Activated naive CD4-positive, alpha-beta T cell treated with anti-CD3 and anti-CD28 coated beads for 36 hours (primary cell): ENCODE measurements at regions of chr11 and their contacts with region 1.

Region 1: DNA sequence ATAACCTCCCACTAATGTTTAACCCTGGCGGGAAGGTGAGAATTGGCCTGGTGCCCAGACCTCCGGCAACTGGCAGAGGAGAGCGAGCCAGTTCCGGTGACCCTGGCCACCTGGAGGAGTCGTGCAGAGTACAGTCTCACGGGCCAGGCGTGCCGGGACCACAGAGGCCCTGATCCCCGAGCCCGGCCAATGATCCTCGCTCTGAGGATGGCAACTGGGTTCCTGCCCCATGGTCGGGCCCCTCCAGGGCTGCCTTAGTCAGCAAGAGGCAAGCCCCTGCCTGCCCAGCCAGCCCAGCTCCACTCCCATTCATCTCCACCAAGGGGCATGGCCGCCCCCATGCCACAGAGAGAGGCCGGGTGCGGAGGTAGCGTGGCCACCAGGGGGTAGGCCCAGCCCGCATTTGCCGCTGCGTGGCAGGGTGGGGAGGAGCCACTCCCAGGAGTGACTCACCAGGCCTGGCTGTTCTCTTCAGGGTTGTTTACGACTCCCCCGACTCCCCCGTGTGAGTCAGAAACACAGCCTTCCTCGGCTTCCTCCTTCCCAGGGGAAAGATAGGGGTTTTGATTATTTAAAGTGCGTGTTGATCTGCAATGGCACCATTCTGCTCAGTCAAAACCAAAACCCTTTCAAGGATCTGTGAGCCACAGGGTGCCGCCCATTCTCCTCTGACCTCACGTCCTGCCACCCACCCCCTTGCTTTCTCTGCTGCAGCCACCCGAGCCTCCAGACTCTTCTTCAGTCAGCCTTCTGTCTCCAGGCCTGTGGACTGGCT is at the start of gene SLC25A45:
- DNase-seq: peak; percentile 97
- H3K4me3 Mint-ChIP-seq: peak within 1 kb of the TSS; percentile 96
- H3K27ac Mint-ChIP-seq: peak within 1 kb of the TSS; percentile 100
- H3K4me1 Mint-ChIP-seq: peaks cover 48% of the 10 kb centered on the region
- H3K27me3 Mint-ChIP-seq: no peaks in the 10 kb centered on the region
- total RNA-seq, gene SLC25A45: 10.4 to 12.1 TPM

Region 2: GRCh38 chr11:65497141-65498041 is 115.2 kb after region 1 on chr11:
- CTCF ChIA-PET with region 1: no interaction called
- intact Hi-C with region 1: loop called (anchors 1 kb)
- DNase-seq: peak; percentile 99
- H3K4me3 Mint-ChIP-seq: no peak overlapping the region
- H3K27ac Mint-ChIP-seq: no peak overlapping the region
- H3K4me1 Mint-ChIP-seq: peaks cover 37% of the 10 kb centered on the region
- H3K27me3 Mint-ChIP-seq: no peaks in the 10 kb centered on the region

Region 3: DNA sequence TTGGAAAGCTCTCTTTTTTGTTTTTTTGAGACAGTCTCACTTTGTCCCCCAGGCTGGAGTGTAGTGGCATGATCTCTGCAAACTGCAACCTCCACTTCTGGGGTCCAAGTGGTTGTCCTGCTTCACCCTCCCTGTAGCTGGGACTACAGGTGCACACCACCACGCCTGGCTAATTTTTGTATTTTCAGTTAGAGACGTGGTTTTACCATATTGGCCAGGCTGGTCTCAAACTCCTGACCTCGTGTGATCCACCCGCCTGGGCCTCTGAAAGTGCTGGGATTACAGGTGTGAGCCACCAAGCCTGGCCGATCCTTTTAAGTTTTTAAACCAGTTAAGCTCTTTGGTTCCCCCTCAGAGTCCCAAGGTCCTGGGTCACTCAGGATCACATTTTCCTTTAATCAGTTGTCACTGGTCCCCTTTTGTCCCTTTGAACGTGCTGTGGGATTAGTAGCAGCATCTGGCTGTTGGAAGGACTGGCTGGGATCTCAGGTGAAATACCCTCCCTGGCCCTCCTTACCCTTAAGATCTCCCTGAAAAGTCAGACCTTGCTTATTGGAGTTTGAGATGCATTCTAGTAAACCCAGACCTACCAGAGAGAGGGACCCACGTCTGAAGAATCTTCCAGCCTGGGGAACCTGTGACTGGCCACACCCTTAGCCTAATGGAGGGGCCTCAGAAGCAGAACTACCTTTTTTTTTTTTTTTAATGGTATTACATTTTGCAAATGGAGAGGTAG is 124.7 kb after region 1 on chr11:
- CTCF ChIA-PET with region 1: interaction called, 5 read pairs
- intact Hi-C with region 1: loop called (anchors 1 kb)
- DNase-seq: peak; percentile 80
- H3K4me3 Mint-ChIP-seq: no peak overlapping the region
- H3K27ac Mint-ChIP-seq: no peak overlapping the region
- H3K4me1 Mint-ChIP-seq: peaks cover 40% of the 10 kb centered on the region
- H3K27me3 Mint-ChIP-seq: no peaks in the 10 kb centered on the region

Region 4: DNA sequence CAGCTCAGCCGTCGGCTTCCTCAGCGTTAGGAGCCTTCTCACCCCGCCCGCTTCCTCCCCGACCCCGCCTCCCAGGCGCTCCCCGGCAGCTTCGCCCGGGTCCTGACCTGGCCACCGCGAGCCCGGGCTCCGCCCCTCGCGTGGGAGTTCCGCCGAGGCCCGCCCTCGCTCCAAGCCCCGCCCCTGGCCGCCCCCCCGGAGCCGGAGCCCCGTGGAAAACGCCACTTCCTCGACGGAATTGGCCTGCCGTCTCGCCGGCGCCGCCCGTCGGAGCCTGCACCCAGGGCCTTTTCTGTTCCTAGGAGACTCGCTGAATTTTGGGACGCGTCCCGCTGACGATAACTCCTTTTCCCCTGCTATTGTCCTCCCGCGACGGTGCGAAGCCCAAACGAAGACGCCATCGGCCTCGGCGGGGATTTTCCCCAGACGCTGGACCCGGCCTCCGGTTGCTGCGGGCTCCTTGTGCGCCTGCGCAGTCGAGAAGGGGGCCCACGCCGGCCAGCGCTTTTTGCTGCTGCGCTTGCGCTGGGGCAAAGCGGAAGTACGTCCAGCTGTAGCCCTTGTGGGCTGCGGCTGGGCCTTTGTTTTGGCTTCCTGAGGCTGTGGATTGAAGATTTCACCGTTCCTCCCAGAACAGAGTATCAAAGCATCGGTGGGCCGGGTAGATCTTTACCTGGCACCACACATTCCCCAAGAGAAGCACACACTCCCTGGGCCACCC is 270.5 kb after region 1 on chr11:
- CTCF ChIA-PET with region 1: no interaction called
- intact Hi-C with region 1: loop called (anchors 5 kb)
- DNase-seq: peak; percentile 95
- H3K4me3 Mint-ChIP-seq: peak overlapping the region; percentile 80
- H3K27ac Mint-ChIP-seq: peak overlapping the region; percentile 94
- H3K4me1 Mint-ChIP-seq: peaks cover 46% of the 10 kb centered on the region
- H3K27me3 Mint-ChIP-seq: no peaks in the 10 kb centered on the region